CD8-positive, alpha-beta T cell (primary cell): ENCODE measurements at regions of chr22 and their contacts with region 1.

Region 1: DNA sequence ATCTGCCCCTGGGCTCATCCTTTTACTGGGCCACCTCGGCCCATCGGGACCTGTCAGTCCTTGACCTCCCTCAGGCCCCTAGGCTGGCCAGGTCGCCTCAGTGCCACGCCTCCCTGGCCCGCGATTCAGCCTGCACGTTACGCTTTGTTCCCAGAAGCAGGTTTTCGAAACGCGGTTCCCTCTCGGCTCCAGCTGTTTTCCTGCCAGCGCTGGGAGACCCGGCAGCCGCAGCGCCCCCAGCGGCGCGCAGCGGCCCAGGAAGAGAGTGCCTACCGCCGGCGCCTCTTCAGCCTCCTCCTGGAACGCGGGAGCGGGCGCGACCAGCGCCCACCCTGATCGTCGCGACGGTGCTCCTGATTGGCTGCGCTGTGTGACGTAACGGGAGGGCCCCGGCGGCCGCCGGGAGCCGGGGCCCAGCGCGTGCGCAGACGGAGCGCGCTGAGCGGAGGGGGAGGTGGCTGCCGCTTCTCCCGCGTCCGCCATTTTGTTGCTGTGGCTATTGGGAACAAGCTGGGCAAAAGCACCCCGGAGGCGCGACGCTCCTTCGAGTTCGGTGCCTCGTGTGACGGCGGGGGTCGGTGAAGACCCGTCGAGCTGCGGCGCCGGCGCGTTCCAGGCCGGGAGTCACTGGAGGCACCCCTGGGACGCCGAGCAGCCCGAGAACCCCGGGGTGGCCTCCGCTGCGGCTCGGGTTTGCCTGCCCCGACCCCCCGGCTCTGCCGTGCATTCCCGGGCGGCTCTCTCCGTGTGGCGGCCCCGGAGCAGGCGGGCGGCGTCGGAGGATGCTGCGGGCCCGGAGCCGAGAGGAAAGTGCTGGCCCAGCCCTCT is at the start of gene CRKL:
- DNase-seq: peak; percentile 89 to 99 (median 96)
- ATAC-seq: peak; percentile 94
- H3K4me3 ChIP-seq: peak within 1 kb of the TSS; percentile 96 to 99
- H3K4me3 Mint-ChIP-seq: peak within 1 kb of the TSS; percentile 97
- H3K27ac ChIP-seq: peak within 1 kb of the TSS; percentile 83 to 90
- H3K27ac Mint-ChIP-seq: peak within 1 kb of the TSS; percentile 95
- H3K4me1 ChIP-seq: peaks cover 34% of the 10 kb centered on the region
- H3K4me1 Mint-ChIP-seq: peaks cover 36% of the 10 kb centered on the region
- H3K27me3 ChIP-seq: no peaks in the 10 kb centered on the region
- H3K27me3 Mint-ChIP-seq: no peaks in the 10 kb centered on the region
- CTCF ChIP-seq: peak; percentile 88
- total RNA-seq, gene CRKL: 57.7 to 60.2 TPM

Region 2: GRCh38 chr22:20783844-20784723 is 133.1 kb before region 1 on chr22:
- CTCF ChIA-PET with region 1: no interaction called
- POLR2A ChIA-PET with region 1: no interaction called
- intact Hi-C with region 1: loop called in 1 of 2 experiments (anchors 10 kb)
- DNase-seq: peak; percentile 8 to 67 (median 44)
- ATAC-seq: peak; percentile 80
- H3K4me3 ChIP-seq: no peak overlapping the region
- H3K4me3 Mint-ChIP-seq: no peak overlapping the region
- H3K27ac ChIP-seq: no peak overlapping the region
- H3K27ac Mint-ChIP-seq: no peak overlapping the region
- H3K4me1 ChIP-seq: no peaks in the 10 kb centered on the region
- H3K4me1 Mint-ChIP-seq: peaks cover 4% of the 10 kb centered on the region
- H3K27me3 ChIP-seq: no peaks in the 10 kb centered on the region
- H3K27me3 Mint-ChIP-seq: no peaks in the 10 kb centered on the region
- CTCF ChIP-seq: peak; percentile 81

Region 3: DNA sequence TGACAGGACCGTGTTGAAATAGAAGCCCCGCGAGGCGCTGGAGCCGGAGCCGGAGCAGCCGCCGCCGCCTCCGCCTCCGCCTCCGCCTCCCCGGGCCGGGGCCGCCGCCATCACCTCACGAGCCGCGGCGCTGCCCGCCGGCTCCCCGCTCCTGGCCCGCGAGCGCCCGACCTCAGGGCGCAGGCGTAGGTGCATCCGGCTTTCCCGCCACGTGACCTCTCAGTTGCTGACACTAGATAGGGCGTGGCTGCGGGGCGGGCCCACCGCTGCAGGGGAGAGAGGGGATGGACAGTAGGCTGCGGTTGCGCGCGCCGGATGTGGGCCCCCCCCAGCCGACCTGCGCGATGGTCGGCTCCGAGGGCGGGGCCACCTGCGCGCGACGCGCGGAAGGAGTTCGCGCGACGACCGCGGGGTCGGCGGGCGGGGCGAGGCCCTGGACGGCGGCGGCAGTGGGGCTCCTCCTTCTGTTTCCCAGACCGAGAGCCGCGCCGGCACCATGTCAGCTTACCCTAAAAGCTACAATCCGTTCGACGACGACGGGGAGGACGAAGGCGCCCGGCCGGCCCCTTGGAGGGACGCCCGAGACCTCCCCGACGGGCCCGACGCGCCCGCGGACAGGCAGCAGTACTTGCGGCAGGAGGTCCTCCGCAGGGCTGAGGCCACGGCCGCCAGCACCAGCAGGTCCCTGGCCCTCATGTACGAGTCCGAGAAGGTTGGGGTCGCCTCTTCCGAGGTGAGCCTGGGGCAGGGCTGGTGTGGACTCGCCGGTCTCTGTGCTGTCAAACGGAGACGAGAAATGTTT is 58.4 kb before region 1 on chr22 and contains the starts of genes PI4KA and SNAP29:
- CTCF ChIA-PET with region 1: interaction called, 5 read pairs
- POLR2A ChIA-PET with region 1: no interaction called
- intact Hi-C with region 1: loop called (anchors 1 kb)
- DNase-seq: peak; percentile 94 to 99 (median 98)
- ATAC-seq: peak; percentile 88
- H3K4me3 ChIP-seq: peak within 1 kb of the TSS; percentile 63 to 78
- H3K4me3 Mint-ChIP-seq: peak within 1 kb of the TSS; percentile 91
- H3K27ac ChIP-seq: peak within 1 kb of the TSS; percentile 72 to 83
- H3K27ac Mint-ChIP-seq: peak within 1 kb of the TSS; percentile 88
- H3K4me1 ChIP-seq: peaks cover 24% of the 10 kb centered on the region
- H3K4me1 Mint-ChIP-seq: peaks cover 65% of the 10 kb centered on the region
- H3K27me3 ChIP-seq: no peaks in the 10 kb centered on the region
- H3K27me3 Mint-ChIP-seq: no peaks in the 10 kb centered on the region
- CTCF ChIP-seq: no peak
- total RNA-seq, gene PI4KA: 154 to 155 TPM
- total RNA-seq, gene SNAP29: 16.5 to 17.1 TPM

Region 4: DNA sequence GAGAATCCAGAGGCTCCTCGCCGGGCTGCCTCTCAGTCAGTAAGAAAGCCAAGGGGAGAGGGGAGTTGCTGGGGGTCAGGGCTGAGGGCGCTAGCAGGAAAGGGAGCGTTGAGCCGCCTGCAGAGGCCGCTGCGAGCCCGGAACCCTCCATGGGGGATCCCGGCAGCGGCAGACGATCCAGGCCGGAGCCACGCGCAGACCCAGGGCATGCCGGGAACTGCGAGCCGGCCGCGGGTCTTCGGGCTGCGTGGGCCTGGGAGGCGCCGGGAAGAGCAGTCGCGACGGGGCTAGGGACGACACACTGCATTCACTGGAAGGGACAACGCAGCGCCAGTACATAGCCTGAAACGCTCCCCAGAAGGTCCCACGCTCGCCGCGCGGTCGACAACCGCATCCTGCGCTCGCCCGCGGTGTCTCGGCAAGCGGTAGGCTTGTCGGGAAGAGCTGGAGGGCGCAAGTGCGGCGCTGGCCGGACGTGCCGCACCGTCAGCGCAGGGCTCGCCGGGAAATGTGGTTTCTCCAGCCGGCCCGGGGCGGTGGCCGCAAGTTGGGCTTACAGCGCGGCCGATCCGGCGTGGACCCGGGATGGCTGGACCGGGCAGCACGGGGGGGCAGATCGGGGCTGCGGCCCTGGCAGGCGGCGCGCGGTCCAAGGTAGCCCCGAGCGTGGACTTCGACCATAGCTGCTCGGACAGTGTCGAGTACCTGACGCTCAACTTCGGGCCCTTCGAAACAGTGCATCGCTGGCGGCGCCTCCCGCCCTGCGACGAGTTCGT is 64.8 kb after region 1 on chr22 and contains the start of gene LZTR1:
- CTCF ChIA-PET with region 1: no interaction called
- POLR2A ChIA-PET with region 1: no interaction called
- intact Hi-C with region 1: loop called in 1 of 2 experiments (anchors 2 kb)
- DNase-seq: peak; percentile 33 to 86 (median 66)
- ATAC-seq: peak; percentile 64
- H3K4me3 ChIP-seq: peak within 1 kb of the TSS; percentile 58 to 74
- H3K4me3 Mint-ChIP-seq: peak within 1 kb of the TSS; percentile 93
- H3K27ac ChIP-seq: peak within 1 kb of the TSS; percentile 66 to 78
- H3K27ac Mint-ChIP-seq: peak within 1 kb of the TSS; percentile 92
- H3K4me1 ChIP-seq: peaks cover 31% of the 10 kb centered on the region
- H3K4me1 Mint-ChIP-seq: peaks cover 43% of the 10 kb centered on the region
- H3K27me3 ChIP-seq: no peaks in the 10 kb centered on the region
- H3K27me3 Mint-ChIP-seq: no peaks in the 10 kb centered on the region
- CTCF ChIP-seq: no peak
- total RNA-seq, gene LZTR1: 42.8 to 44.8 TPM